ENCODE measurements at regions of chr9 and their contacts with region 1.

Region 1: GRCh38 chr9:96553070-96553469 is 66.6 kb downstream of the CDC14B start:
- DNase-seq: no peak
- ATAC-seq: no peak
- H3K4me3 ChIP-seq: no peak overlapping the region
- H3K27ac ChIP-seq: peak overlapping the region in 3 of 10 donors; percentile 37 to 71 (median 56)
- H3K4me1 ChIP-seq: peaks cover 0 to 52% (median 30%) of the 10 kb centered on the region in 9 donors
- H3K27me3 ChIP-seq: no peaks in the 10 kb centered on the region
- CTCF ChIP-seq: no peak

Region 2: DNA sequence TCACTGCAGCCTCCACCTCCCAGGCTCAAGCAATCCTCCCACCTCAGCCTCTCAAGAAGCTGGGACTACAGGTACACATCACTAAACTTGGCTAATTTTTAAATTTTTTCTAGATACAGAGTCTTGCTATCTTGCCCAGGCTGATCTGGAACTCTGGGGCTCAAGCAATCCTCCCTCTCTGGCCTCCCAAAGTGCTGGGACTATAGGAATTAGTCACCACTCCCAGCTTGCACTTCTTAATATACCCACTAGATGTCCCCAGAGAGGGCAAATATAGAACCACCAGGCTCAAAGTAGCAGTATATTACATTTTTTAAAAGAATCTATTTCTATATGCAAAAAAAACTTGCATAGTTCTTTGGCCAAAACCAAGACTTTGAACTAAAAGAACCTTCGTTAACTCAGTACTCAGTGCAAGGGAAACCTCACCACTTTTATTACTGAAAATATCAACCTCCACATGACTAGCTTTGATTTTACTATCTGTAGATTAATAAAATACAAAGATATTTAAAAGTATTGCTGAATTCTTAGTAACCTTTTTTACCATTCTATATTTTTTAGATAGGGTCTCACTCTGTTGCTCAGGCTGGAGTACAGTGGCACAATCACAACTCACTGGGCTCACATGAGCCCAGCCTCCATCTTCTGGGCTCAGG is 225.2 kb before region 1 on chr9:
- intact Hi-C with region 1: loop called in 1 of 10 experiments (anchors 10 kb)
- DNase-seq: peak in 1 of 2 donors; percentile 52
- ATAC-seq: peak; percentile 29 to 86 (median 70)
- H3K4me3 ChIP-seq: no peak overlapping the region
- H3K27ac ChIP-seq: no peak overlapping the region
- H3K4me1 ChIP-seq: no peaks in the 10 kb centered on the region
- H3K27me3 ChIP-seq: no peaks in the 10 kb centered on the region
- CTCF ChIP-seq: peak; percentile 81 to 90 (median 85)

Region 3: DNA sequence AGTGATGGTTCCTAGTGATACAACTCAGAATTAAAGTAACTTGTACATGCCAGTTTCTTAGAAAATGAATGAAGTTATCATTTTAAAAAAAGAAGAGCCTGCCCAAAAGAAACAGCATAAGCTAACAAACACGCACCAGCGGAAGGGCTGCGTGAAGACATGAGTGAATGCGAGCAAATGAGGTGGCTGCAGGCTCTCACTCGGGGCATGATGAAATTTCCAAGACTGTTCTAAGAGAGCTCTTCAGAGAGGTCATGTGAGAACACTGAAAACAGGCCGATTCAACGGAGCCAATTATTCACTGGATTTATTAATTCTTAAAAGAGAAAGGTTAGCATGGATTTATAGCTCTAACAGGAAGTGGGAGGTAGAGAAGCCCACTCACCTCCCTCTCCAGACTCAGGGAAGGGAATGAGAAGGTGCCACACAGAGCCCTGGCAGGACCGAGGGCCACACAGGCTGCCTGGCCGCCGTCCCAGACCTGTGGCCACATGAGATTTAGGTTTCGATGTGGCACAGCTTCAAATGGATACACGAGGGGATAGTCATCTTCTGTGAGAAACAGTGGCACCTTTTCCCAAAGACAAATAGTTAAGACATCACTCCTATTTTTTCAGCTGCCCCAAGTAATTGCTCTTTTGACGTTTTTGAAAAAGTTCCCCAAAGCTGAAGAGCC is 47.6 kb before region 1 on chr9:
- intact Hi-C with region 1: loop called in 1 of 10 experiments (anchors 5 kb)
- DNase-seq: no peak
- ATAC-seq: peak in 2 of 8 donors; percentile 31 to 65
- H3K4me3 ChIP-seq: no peak overlapping the region
- H3K27ac ChIP-seq: no peak overlapping the region
- H3K4me1 ChIP-seq: peaks cover 2 to 61% (median 19%) of the 10 kb centered on the region in 9 donors
- H3K27me3 ChIP-seq: no peaks in the 10 kb centered on the region
- CTCF ChIP-seq: no peak

Region 4: DNA sequence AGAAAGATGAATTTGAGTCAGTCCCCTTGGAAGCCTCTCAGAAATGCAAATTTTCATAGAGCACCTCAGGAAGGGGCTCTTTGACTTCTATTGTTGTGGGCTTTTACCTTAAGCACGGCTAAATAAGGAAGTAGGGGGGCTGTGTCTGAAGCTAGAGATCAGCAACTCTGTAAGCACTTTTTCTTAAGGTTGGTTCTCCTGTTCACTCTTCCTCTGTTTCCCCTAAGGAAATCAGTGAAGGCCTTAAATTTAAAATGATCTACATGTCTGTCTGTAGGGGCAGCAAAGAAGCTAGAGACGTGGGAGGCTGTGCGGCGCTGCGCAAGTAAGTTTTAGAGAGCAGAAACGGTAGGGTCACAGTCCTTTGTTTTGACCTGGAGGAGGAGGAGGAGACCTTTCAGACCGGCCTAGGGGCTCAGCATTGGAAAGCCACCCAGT is 67.8 kb after region 1 on chr9:
- intact Hi-C with region 1: no loop called
- DNase-seq: no peak
- ATAC-seq: no peak
- H3K4me3 ChIP-seq: no peak overlapping the region
- H3K27ac ChIP-seq: no peak overlapping the region
- H3K4me1 ChIP-seq: peaks cover 0 to 15% (median 4%) of the 10 kb centered on the region in 9 donors
- H3K27me3 ChIP-seq: peaks cover 0 to 54% (median 0%) of the 10 kb centered on the region in 7 donors
- CTCF ChIP-seq: no peak